Activated CD8-positive, alpha-beta T cell treated with anti-CD3 and anti-CD28 coated beads for 36 hours (primary cell): ENCODE measurements at regions of chr16 and their contacts with region 1.

Region 1: DNA sequence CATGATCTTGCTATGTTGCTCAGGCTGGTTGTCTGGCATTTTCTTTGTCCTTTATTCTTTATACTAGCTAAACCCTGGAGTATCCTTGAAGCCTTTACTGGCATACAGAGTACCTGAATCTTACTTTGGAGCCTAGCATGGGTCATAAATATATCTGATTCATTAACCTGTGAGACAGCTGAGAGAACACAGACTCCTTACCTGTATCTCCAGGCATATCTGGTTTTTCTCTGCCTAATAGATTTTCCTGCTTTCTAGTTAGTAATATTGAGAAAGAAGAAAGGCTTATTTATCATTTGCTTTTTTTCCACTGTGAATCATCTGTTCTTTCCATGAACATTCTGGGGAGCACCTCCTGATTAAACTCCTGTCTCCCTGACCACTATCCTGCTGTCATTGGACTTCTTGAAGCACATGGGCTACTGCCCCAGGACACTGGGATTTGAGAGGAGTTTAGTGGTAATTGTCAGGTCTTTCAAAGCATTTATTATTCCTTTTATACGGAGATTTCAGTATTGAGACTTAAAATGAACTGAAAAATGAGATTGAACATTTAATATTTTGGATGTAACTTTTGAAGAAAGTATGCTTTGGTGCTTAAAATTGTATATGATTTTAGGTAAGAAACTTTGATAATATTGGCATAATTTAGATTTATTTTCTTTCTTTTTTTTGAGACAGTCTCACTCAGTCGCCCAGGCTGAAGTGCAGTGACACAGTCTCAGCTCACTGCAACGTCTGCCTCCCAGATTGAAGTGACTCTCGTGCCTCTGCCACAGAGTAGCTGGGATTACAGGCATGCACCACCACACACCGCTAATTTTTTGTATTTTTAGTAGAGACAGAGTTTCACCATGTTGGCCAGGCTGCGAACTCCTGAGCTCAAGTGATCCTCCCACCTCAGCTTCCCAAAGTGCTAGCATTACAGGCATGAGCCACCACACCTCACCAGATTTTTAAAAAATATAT is 8.6 kb downstream of the PDP2 start:
- DNase-seq: no peak
- ATAC-seq: no peak
- H3K4me3 Mint-ChIP-seq: no peak overlapping the region
- H3K27ac Mint-ChIP-seq: peak overlapping the region; percentile 66
- H3K4me1 Mint-ChIP-seq: peaks cover 39% of the 10 kb centered on the region
- H3K27me3 Mint-ChIP-seq: no peaks in the 10 kb centered on the region
- CTCF ChIP-seq: no peak

Region 2: DNA sequence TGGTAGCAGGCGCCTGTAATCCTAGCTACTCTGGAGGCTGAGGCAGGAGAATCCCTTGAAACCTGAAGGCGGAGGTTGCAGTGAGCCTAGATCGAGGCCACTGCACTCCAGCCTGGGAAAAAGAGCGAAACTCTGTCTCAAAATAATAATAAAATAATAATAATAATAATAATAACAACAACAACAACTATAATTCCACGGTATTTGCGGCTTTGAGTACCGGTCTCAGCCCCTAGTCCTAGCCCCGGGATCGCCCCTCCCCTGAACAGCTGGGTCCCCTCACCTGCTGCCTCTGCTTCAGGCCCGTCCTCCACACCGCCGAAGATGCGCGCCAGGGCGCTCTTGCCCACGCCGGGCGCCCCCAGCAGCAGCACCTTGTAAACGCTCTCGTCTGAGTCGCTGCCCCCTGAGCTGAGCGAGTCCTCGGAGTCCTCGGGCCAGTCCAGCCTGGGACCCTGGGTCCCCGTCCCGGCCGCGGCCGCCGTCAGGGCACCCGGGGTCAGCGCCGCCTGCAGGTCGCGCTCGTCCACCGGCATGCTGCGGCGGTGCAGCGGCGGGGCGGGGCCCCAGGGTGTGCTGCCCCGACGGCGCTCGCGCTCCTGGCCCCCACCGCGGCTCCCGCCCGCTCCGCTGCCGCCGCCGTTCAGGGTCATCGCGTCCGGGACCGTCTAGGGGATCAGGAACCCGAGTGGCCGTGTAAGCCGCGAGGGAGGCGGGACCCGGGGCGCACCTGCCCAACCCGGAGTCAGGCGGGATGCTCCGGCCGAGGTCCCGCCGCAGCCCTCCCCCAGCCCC is 35.8 kb after region 1 on chr16:
- CTCF ChIA-PET with region 1: interaction called, 54 read pairs
- POLR2A ChIA-PET with region 1: no interaction called
- intact Hi-C with region 1: no loop called
- DNase-seq: peak; percentile 53
- ATAC-seq: peak; percentile 75
- H3K4me3 Mint-ChIP-seq: peak overlapping the region; percentile 44
- H3K27ac Mint-ChIP-seq: no peak overlapping the region
- H3K4me1 Mint-ChIP-seq: peaks cover 12% of the 10 kb centered on the region
- H3K27me3 Mint-ChIP-seq: peaks cover 35% of the 10 kb centered on the region
- CTCF ChIP-seq: peak; percentile 63